Caco-2 (cell line): ENCODE measurements at regions of chr16 and their contacts with region 1.

Region 1: DNA sequence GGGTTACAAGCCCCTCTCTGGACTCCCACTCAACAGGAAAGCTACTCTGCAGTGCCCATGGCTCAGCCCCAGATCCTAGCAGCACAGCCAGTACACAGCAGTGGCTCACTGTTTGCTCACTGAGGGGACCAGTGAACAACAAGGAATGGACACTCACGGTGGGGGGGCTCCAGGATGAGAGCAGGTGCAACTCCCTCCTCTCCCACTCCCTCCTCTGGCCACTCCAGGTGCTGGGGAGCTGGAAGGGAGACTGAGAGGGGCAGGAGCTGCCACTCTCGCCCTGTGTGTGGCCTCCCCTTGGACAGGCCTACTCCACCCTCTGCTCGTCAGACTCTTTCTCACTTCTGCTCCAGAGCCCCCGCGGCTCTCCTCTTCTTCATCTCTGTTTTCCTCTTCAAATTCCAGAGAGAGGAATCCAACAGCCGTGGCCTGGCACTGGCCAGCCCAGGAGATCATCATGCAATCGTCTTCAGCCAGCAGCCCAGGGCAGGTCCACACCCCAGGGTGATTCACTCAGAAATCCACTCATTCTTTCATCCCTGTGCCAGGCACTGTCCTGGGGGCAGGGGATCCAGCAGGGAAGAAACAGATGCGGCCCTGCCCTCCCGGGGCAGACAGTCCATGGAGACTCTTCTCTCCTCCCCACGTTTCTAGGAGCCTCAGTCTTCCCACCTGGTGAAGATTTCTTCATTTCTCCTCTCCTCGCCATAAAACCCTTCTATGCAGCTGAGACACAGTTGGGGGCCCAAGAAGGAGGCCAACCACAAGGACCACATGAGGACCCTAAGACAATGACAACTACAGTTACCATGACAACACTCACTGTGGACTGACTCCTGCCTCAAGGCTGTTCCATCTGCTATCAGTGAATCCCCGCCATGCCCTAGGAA is 30.7 kb downstream of the CFAP20 start:
- DNase-seq: no peak
- H3K4me3 ChIP-seq: no peak overlapping the region
- H3K4me3 Mint-ChIP-seq: no peak overlapping the region
- H3K27ac Mint-ChIP-seq: no peak overlapping the region
- H3K4me1 ChIP-seq: no peaks in the 10 kb centered on the region
- H3K4me1 Mint-ChIP-seq: no peaks in the 10 kb centered on the region
- H3K27me3 ChIP-seq: no peaks in the 10 kb centered on the region
- H3K27me3 Mint-ChIP-seq: peaks cover 5% of the 10 kb centered on the region
- CTCF ChIP-seq: no peak

Region 2: GRCh38 chr16:58077853-58078252 is 20.6 kb before region 1 on chr16:
- CTCF ChIA-PET with region 1: no interaction called
- POLR2A ChIA-PET with region 1: no interaction called
- intact Hi-C with region 1: no loop called
- DNase-seq: no peak
- H3K4me3 ChIP-seq: no peak overlapping the region
- H3K4me3 Mint-ChIP-seq: no peak overlapping the region
- H3K27ac Mint-ChIP-seq: no peak overlapping the region
- H3K4me1 ChIP-seq: no peaks in the 10 kb centered on the region
- H3K4me1 Mint-ChIP-seq: no peaks in the 10 kb centered on the region
- H3K27me3 ChIP-seq: no peaks in the 10 kb centered on the region
- H3K27me3 Mint-ChIP-seq: no peaks in the 10 kb centered on the region
- CTCF ChIP-seq: no peak

Region 3: DNA sequence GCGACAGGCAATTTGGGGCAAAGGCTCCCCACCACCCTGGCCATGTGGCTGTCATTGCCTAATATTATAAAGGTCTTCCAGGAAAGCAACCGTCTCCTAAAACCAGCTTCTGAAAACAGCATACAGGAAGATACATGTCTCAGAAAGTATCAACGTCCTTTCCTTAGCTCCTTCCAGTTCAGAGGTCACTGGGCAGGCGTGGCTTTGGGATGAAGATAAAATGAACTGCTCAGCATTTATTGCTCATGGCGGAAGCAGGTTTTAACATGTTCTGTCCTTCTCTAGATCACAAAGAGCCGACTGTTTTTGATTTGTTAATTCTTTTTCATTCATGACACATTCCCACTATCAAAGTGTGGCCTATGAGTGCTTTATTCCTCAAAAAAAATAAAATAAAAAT is 22.7 kb after region 1 on chr16:
- CTCF ChIA-PET with region 1: interaction called, 16 read pairs
- POLR2A ChIA-PET with region 1: no interaction called
- intact Hi-C with region 1: loop called (anchors 1 kb)
- DNase-seq: no peak
- H3K4me3 ChIP-seq: no peak overlapping the region
- H3K4me3 Mint-ChIP-seq: no peak overlapping the region
- H3K27ac Mint-ChIP-seq: peak overlapping the region; percentile 29
- H3K4me1 ChIP-seq: peaks cover 38% of the 10 kb centered on the region
- H3K4me1 Mint-ChIP-seq: peaks cover 42% of the 10 kb centered on the region
- H3K27me3 ChIP-seq: no peaks in the 10 kb centered on the region
- H3K27me3 Mint-ChIP-seq: no peaks in the 10 kb centered on the region
- CTCF ChIP-seq: no peak